ENCODE measurements at regions of chr3 and their contacts with region 1.

Region 1: DNA sequence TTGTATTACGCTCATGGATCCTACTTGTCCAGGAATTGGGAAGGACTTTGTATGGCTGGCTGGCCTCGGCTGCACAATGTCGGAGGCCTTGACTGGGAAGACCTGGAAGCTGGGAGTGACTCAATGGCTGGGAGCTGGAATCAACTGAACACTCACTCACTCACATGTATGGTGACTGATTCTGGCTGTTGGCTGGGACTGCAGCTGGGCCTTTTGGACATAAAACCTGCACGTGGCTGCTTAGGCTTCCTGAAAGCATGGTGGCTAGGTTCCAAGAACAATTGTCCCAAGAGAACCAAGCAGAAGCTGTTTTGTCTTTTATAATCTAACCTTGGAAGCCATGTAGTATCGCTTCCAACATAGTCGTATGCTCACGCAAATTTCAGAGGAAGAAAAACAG is 38.0 kb upstream of the CMTM8 start:
- DNase-seq: peak; percentile 77
- H3K4me3 ChIP-seq: peak overlapping the region; percentile 10
- H3K27ac ChIP-seq: peak overlapping the region; percentile 90
- H3K4me1 ChIP-seq: peaks cover 74% of the 10 kb centered on the region
- H3K27me3 ChIP-seq: no peaks in the 10 kb centered on the region
- CTCF ChIP-seq: no peak

Region 2: GRCh38 chr3:32238453-32239306 is 38.2 kb after region 1 on chr3 and contains the start of gene CMTM8:
- intact Hi-C with region 1: loop called (anchors 5 kb)
- DNase-seq: peak; percentile 43
- H3K4me3 ChIP-seq: peak within 1 kb of the TSS; percentile 88
- H3K27ac ChIP-seq: peak within 1 kb of the TSS; percentile 92
- H3K4me1 ChIP-seq: peaks cover 41% of the 10 kb centered on the region
- H3K27me3 ChIP-seq: no peaks in the 10 kb centered on the region
- CTCF ChIP-seq: no peak
- total RNA-seq, gene CMTM8: 5.7 TPM